ENCODE measurements at regions of chr15 and their contacts with region 1.

Region 1: DNA sequence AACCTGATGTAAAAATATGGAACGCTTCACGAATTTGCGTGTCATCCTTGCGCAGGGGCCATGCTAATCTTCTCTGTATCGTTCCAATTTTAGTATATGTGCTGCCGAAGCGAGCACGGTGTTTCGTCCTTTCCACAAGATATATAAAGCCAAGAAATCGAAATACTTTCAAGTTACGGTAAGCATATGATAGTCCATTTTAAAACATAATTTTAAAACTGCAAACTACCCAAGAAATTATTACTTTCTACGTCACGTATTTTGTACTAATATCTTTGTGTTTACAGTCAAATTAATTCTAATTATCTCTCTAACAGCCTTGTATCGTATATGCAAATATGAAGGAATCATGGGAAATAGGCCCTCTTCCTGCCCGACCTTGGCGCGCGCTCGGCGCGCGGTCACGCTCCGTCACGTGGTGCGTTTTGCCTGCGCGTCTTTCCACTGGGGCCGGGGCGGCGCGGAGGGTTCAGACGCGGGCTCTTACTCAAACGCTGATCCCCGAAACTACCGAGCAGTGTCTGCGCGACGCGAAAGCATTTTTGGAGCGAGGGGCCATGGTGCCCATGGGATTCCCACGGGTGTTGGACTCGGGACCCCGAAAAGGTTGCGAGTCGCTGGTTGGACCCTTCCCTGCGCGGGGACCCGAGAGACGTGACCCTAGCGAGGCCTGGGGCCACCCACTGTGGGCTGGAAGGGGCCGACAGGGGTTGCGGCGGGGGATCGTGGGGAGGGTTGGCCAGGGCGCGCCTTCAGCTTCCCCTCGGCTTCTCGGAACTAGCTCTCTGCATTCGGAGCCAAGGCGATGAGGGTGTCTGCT is at the start of gene RNU6-1:
- DNase-seq: peak; percentile 91 to 99 (median 97)
- ATAC-seq: peak; percentile 93
- H3K4me3 ChIP-seq: peak within 1 kb of the TSS; percentile 82
- H3K4me3 Mint-ChIP-seq: peak within 1 kb of the TSS; percentile 82 to 97 (median 94)
- H3K27ac ChIP-seq: peak within 1 kb of the TSS; percentile 96
- H3K27ac Mint-ChIP-seq: peak within 1 kb of the TSS; percentile 95 to 100 (median 99)
- H3K4me1 ChIP-seq: peaks cover 18 to 21% of the 10 kb centered on the region in 2 donors
- H3K4me1 Mint-ChIP-seq: peaks cover 17 to 51% (median 25%) of the 10 kb centered on the region in 7 donors
- H3K27me3 ChIP-seq: peaks cover 0 to 7% of the 10 kb centered on the region in 2 donors
- H3K27me3 Mint-ChIP-seq: peaks cover 2 to 40% (median 7%) of the 10 kb centered on the region in 5 donors
- total RNA-seq, gene RNU6-1: not detected

Region 2: GRCh38 chr15:66946578-66947164 is 893.5 kb before region 1 on chr15:
- CTCF ChIA-PET with region 1: interaction called, 5 read pairs
- POLR2A ChIA-PET with region 1: no interaction called
- intact Hi-C with region 1: loop called (anchors 1 kb)
- DNase-seq: peak; percentile 50 to 78 (median 68)
- ATAC-seq: peak; percentile 86
- H3K4me3 ChIP-seq: no peak overlapping the region
- H3K4me3 Mint-ChIP-seq: peak overlapping the region in 2 of 10 donors; percentile 17
- H3K27ac ChIP-seq: no peak overlapping the region
- H3K27ac Mint-ChIP-seq: no peak overlapping the region
- H3K4me1 ChIP-seq: no peaks in the 10 kb centered on the region
- H3K4me1 Mint-ChIP-seq: peaks cover 0 to 26% (median 4%) of the 10 kb centered on the region in 7 donors
- H3K27me3 ChIP-seq: no peaks in the 10 kb centered on the region
- H3K27me3 Mint-ChIP-seq: peaks cover 0 to 9% (median 0%) of the 10 kb centered on the region in 5 donors

Region 3: GRCh38 chr15:67254238-67255175 is 585.6 kb before region 1 on chr15 and contains the starts of genes AAGAB and IQCH:
- CTCF ChIA-PET with region 1: no interaction called
- POLR2A ChIA-PET with region 1: no interaction called
- intact Hi-C with region 1: loop called (anchors 1 kb)
- DNase-seq: peak; percentile 81 to 98 (median 91)
- ATAC-seq: peak; percentile 99
- H3K4me3 ChIP-seq: peak within 1 kb of the TSS; percentile 69
- H3K4me3 Mint-ChIP-seq: peak within 1 kb of the TSS; percentile 87 to 100 (median 96)
- H3K27ac ChIP-seq: peak within 1 kb of the TSS; percentile 84
- H3K27ac Mint-ChIP-seq: peak within 1 kb of the TSS; percentile 86 to 99 (median 95)
- H3K4me1 ChIP-seq: peaks cover 4 to 13% of the 10 kb centered on the region in 2 donors
- H3K4me1 Mint-ChIP-seq: peaks cover 25 to 52% (median 41%) of the 10 kb centered on the region in 7 donors
- H3K27me3 ChIP-seq: no peaks in the 10 kb centered on the region
- H3K27me3 Mint-ChIP-seq: peaks cover 0 to 25% (median 0%) of the 10 kb centered on the region in 5 donors
- total RNA-seq, gene AAGAB: 19.5 to 44.9 (median 22.3) TPM
- total RNA-seq, gene IQCH: 0.22 to 1.9 (median 0.84) TPM

Region 4: DNA sequence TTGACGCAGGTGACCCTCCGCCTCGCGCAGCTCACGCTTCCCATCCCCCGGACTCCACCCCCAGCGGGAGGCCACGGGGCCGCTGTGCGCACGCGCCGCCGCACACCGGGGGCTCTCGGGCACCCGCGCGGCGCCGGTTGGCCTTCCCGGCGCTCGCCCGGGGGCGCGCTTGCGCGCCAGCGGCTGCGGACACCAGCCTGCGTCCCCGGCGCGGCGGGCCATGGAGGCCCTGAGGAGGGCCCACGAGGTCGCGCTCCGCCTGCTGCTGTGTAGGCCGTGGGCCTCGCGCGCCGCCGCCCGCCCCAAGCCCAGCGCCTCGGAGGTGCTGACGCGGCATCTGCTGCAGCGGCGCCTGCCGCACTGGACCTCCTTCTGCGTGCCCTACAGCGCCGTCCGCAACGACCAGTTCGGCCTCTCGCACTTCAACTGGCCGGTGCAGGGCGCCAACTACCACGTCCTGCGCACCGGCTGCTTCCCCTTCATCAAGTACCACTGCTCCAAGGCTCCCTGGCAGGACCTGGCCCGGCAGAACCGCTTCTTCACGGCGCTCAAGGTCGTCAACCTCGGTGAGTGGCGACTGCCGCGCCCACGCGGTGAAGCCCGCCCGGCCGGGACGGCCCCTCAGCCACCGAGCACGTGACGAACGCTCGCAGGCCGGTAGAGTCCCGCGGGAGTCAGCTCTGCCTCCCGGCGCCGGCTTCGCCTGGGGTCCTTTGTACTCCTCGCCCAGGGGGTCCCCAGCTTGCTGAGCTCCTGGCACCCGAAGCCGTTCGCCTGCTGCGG is 318.9 kb before region 1 on chr15 and contains the start of gene C15orf61:
- CTCF ChIA-PET with region 1: interaction called, 4 read pairs
- POLR2A ChIA-PET with region 1: interaction called, 3 read pairs
- intact Hi-C with region 1: loop called (anchors 1 kb)
- DNase-seq: peak; percentile 78 to 92 (median 82)
- ATAC-seq: peak; percentile 90
- H3K4me3 ChIP-seq: peak within 1 kb of the TSS; percentile 87
- H3K4me3 Mint-ChIP-seq: peak within 1 kb of the TSS; percentile 85 to 98 (median 95)
- H3K27ac ChIP-seq: peak within 1 kb of the TSS; percentile 85
- H3K27ac Mint-ChIP-seq: peak within 1 kb of the TSS; percentile 88 to 96 (median 94)
- H3K4me1 ChIP-seq: peaks cover 16 to 28% of the 10 kb centered on the region in 2 donors
- H3K4me1 Mint-ChIP-seq: peaks cover 20 to 40% (median 34%) of the 10 kb centered on the region in 7 donors
- H3K27me3 ChIP-seq: no peaks in the 10 kb centered on the region
- H3K27me3 Mint-ChIP-seq: no peaks in the 10 kb centered on the region
- total RNA-seq, gene C15orf61: 4.3 to 11.0 (median 8.2) TPM

Region 5: DNA sequence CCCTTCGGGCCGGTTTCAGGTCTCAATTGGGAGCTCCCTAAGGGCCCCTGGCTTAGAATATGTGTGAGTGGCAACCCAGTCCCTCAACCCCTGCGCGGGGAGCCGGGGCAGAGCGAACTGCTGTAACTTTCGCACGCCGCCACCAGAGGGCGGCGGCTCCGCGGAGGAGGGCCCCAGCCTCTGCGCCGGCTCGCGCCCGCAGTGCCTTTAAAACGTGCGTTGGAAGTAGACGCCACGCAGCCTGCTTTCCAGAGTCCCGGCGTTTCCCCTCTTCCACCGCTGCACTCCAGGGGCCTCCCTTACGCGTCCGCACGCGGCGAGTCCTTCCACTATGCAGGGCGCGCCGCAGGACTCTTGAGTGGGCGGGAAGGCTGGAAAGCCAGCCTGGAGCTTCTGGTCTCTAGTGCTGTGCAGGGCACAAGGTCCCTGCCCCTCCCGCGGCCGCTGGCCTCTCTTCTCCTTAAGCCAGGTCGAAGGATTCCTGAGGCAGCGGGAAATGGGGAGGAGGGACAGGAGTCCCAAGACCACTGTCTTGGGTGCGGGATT is 23.4 kb after region 1 on chr15:
- CTCF ChIA-PET with region 1: interaction called, 3 read pairs
- POLR2A ChIA-PET with region 1: interaction called, 6 read pairs
- intact Hi-C with region 1: loop called in 1 of 2 experiments (anchors 1 kb)
- DNase-seq: peak; percentile 49 to 77 (median 65)
- ATAC-seq: peak; percentile 99
- H3K4me3 ChIP-seq: peak overlapping the region; percentile 25
- H3K4me3 Mint-ChIP-seq: peak overlapping the region in 8 of 10 donors; percentile 28 to 81 (median 52)
- H3K27ac ChIP-seq: no peak overlapping the region
- H3K27ac Mint-ChIP-seq: no peak overlapping the region
- H3K4me1 ChIP-seq: peaks cover 0 to 5% of the 10 kb centered on the region in 2 donors
- H3K4me1 Mint-ChIP-seq: peaks cover 0 to 4% (median 3%) of the 10 kb centered on the region in 7 donors
- H3K27me3 ChIP-seq: no peaks in the 10 kb centered on the region
- H3K27me3 Mint-ChIP-seq: peaks cover 8 to 48% (median 9%) of the 10 kb centered on the region in 5 donors

Region 6: GRCh38 chr15:68229386-68230156 is 389.4 kb after region 1 on chr15 and contains the start of gene CLN6:
- CTCF ChIA-PET with region 1: no interaction called
- POLR2A ChIA-PET with region 1: interaction called, 3 read pairs
- intact Hi-C with region 1: loop called in 1 of 2 experiments (anchors 1 kb)
- DNase-seq: peak; percentile 68 to 88 (median 81)
- ATAC-seq: peak; percentile 94
- H3K4me3 ChIP-seq: peak within 1 kb of the TSS; percentile 93
- H3K4me3 Mint-ChIP-seq: peak within 1 kb of the TSS; percentile 86 to 98 (median 92)
- H3K27ac ChIP-seq: peak within 1 kb of the TSS; percentile 79
- H3K27ac Mint-ChIP-seq: peak within 1 kb of the TSS; percentile 69 to 97 (median 88)
- H3K4me1 ChIP-seq: peaks cover 0 to 17% of the 10 kb centered on the region in 2 donors
- H3K4me1 Mint-ChIP-seq: peaks cover 30 to 44% (median 38%) of the 10 kb centered on the region in 7 donors
- H3K27me3 ChIP-seq: no peaks in the 10 kb centered on the region
- H3K27me3 Mint-ChIP-seq: peaks cover 0 to 3% (median 0%) of the 10 kb centered on the region in 5 donors
- total RNA-seq, gene CLN6: 15.0 to 66.6 (median 19.0) TPM